Sigmoid colon (tissue), 7 donors: ENCODE measurements at regions of chr17 and their contacts with region 1.

Region 1: DNA sequence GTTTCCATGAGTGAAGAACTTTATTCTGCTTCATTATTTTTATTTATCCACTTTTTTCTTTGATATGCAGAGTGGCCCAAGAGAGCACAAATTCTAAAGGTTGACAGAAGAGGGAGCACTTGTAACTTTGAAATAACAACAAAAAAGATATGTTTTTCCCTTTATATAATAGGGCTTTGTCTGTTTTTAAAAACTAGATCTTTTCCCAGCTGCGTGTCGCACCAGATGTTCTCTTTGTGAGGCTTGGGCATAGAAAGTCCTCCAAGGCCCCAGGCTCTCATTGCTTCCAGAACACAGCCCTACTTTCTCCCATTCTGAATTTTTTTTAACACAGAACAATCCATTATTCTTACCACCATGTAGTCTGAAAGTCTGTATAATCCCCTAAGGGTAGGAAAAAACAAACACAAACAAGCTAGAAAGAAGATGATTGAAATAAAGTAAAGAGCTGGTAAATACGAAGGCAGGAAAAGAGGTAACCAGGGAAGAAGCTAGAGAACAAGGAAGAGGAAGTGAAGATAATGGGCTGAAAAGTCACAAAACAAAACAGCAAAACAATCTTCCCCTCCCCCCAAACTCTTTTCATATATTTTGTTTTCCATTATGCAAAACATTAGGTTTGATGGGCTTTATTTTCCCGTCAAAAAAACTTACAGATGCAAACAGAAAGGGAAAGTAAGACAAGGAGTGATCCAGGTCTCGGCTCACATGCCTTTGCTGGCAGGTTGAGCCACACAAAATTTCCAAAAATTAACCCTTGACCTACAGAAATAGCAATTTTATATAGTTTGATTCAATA is 160.4 kb downstream of the ABCA8 start:
- DNase-seq: no peak
- H3K4me3 ChIP-seq: no peak overlapping the region
- H3K27ac ChIP-seq: peak overlapping the region; percentile 64 to 69 (median 68)
- H3K4me1 ChIP-seq: peaks cover 0 to 15% (median 0%) of the 10 kb centered on the region in 4 donors
- H3K27me3 ChIP-seq: no peaks in the 10 kb centered on the region
- CTCF ChIP-seq: peak in 1 of 4 experiments; percentile 8
- EP300 ChIP-seq: no peak
- POLR2A ChIP-seq: no peak

Region 2: GRCh38 chr17:68909066-68909465 is 114.2 kb after region 1 on chr17:
- intact Hi-C with region 1: loop called (anchors 10 kb)
- DNase-seq: peak; percentile 87
- H3K4me3 ChIP-seq: no peak overlapping the region
- H3K27ac ChIP-seq: peak overlapping the region; percentile 5 to 65 (median 62)
- H3K4me1 ChIP-seq: peaks cover 0 to 34% (median 26%) of the 10 kb centered on the region in 4 donors
- H3K27me3 ChIP-seq: no peaks in the 10 kb centered on the region
- CTCF ChIP-seq: no peak
- EP300 ChIP-seq: no peak
- POLR2A ChIP-seq: no peak

Region 3: DNA sequence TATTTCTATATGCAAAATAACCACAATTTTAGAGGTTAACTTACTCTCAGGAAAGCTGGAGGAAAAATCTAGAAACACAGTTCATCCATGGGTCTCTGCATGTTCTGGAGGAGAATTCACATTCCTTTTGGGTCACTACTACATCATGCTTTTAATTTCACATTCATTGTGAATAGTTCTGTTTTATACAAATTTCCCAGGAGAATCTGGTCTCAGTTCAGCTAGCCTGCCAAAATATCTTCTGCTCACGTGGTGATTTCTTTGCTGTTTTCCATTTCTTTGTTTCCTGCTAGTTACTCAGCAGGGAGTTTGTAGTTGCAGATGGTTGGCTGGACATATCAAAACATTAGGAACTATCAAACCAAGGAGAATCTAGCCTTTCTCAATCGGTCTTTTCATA is 266.0 kb after region 1 on chr17 and contains the start of gene ABCA9:
- intact Hi-C with region 1: loop called (anchors 5 kb)
- DNase-seq: no peak
- H3K4me3 ChIP-seq: peak within 1 kb of the TSS; percentile 1 to 25 (median 20)
- H3K27ac ChIP-seq: peak within 1 kb of the TSS; percentile 43 to 56 (median 48)
- H3K4me1 ChIP-seq: peaks cover 0 to 5% (median 0%) of the 10 kb centered on the region in 4 donors
- H3K27me3 ChIP-seq: no peaks in the 10 kb centered on the region
- CTCF ChIP-seq: no peak
- EP300 ChIP-seq: no peak
- POLR2A ChIP-seq: no peak
- total RNA-seq, gene ABCA9: 11.1 to 74.5 (median 41.7) TPM